Mammary epithelial cell (primary cell): ENCODE measurements at regions of chr10 and their contacts with region 1.

Region 1: DNA sequence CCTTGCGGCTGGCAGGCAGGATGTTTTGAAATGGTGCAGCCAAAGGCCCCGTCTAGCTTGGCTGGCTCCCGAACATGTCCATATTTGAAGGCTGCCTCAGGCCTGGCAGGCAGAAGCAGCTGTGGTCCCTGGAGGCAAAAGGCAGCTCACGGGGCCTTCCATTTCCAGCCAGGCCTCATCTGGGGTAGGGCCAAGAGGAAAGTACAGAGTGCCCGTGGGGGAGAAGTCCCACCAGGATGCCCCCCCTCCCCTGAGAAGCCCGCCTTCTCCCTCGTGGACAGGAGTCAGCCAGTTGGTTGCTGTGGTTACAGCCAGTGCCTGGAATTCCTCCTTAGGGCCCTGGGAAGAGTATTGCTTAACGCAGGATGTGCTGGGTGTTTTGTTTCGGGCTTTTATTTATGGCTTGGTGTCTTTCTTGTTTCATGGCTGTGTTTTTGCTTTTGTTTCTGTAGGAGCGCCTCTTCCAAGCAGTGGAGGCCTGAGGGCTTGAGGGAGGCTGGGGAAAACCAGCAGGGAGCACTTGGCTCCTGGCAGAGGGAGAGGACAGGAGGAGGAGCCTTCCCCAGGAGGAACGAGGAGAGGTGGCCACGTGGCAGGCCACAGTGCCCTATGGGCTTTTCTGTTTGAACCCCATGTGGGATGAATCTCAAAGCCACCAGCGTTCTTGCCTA is 45.4 kb downstream of the CHST3 start:
- DNase-seq: peak; percentile 91
- H3K4me3 ChIP-seq: no peak overlapping the region
- H3K27ac ChIP-seq: peak overlapping the region; percentile 92
- H3K4me1 ChIP-seq: peaks cover 34% of the 10 kb centered on the region
- H3K27me3 ChIP-seq: no peaks in the 10 kb centered on the region
- CTCF ChIP-seq: no peak

Region 2: GRCh38 chr10:71829171-71829570 is 180.4 kb before region 1 on chr10:
- CTCF ChIA-PET with region 1: no interaction called
- dilution Hi-C with region 1: no loop called
- in situ Hi-C with region 1: no loop called
- intact Hi-C with region 1: no loop called
- DNase-seq: no peak
- H3K4me3 ChIP-seq: no peak overlapping the region
- H3K27ac ChIP-seq: no peak overlapping the region
- H3K4me1 ChIP-seq: peaks cover 13% of the 10 kb centered on the region
- H3K27me3 ChIP-seq: no peaks in the 10 kb centered on the region
- CTCF ChIP-seq: no peak

Region 3: DNA sequence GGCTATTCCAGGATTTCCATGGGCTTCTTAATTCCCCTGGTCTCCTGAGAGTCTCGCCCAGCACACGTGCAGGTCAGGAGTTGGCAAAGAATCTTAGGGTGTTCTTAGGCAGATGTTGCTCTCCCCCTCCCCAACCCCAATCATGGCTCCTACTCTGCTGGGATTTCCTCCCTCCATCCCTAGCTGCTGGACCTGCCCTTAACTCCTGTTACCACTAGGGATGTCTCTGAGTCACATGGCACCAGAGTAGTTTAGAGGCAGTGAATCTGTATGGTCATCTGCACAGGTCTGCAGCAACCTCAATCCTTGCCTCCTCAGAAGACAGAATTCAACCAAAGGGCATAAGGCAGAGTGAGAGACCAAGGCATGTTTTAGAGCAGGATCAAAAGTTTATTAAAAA is 97.1 kb before region 1 on chr10:
- CTCF ChIA-PET with region 1: no interaction called
- dilution Hi-C with region 1: loop called (anchors 5 kb)
- in situ Hi-C with region 1: no loop called
- intact Hi-C with region 1: no loop called
- DNase-seq: no peak
- H3K4me3 ChIP-seq: no peak overlapping the region
- H3K27ac ChIP-seq: no peak overlapping the region
- H3K4me1 ChIP-seq: no peaks in the 10 kb centered on the region
- H3K27me3 ChIP-seq: no peaks in the 10 kb centered on the region
- CTCF ChIP-seq: peak; percentile 21 to 30

Region 4: GRCh38 chr10:71963756-71964668 is 45.5 kb before region 1 on chr10 and contains the start of gene CHST3:
- CTCF ChIA-PET with region 1: no interaction called
- dilution Hi-C with region 1: no loop called
- in situ Hi-C with region 1: no loop called
- intact Hi-C with region 1: loop called (anchors 2 kb)
- DNase-seq: peak; percentile 54
- H3K4me3 ChIP-seq: peak within 1 kb of the TSS; percentile 73 to 85 (median 80)
- H3K27ac ChIP-seq: peak within 1 kb of the TSS; percentile 91
- H3K4me1 ChIP-seq: peaks cover 31% of the 10 kb centered on the region
- H3K27me3 ChIP-seq: no peaks in the 10 kb centered on the region
- CTCF ChIP-seq: no peak
- total RNA-seq, gene CHST3: 32.4 to 85.0 TPM

Region 5: GRCh38 chr10:71974489-71975021 is 35.0 kb before region 1 on chr10:
- CTCF ChIA-PET with region 1: no interaction called
- dilution Hi-C with region 1: no loop called
- in situ Hi-C with region 1: no loop called
- intact Hi-C with region 1: loop called (anchors 1 kb)
- DNase-seq: peak; percentile 92
- H3K4me3 ChIP-seq: no peak overlapping the region
- H3K27ac ChIP-seq: peak overlapping the region; percentile 88
- H3K4me1 ChIP-seq: peaks cover 96% of the 10 kb centered on the region
- H3K27me3 ChIP-seq: no peaks in the 10 kb centered on the region
- CTCF ChIP-seq: no peak

Region 6: DNA sequence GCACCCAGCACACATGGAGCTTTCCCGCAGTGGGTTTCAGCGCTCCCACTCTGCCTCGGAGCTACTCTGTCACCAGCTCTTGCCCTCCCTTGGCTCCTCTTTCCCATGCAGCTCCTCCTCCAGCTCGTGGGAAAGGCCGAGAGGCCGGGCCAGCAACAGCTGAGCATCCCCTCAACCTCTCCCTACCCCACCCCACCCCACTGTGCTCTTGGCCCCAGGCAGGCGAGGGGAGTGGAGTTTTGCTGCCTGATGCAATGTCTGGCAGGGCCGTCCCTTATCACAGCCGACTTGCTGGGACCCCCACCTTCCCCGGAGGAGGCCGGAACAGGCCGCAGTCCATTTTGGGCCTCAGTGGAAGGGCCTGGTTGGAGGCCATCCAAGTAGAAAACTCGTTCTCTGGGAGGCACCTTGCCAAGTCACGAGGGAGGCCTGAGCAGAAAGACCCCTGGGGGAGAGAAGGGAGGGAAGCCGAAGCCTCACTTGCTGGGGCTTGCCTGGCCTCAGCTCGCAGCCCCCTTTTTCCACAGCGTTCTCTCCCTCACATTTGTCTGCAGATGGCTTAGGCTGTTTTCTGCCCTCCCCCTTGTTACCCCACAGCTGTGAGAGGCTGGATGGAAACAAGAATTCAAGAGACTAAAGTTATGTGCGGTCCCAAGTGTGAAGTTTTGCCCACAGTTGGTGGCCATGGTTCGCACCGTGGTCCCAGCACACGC is 10.0 kb before region 1 on chr10:
- CTCF ChIA-PET with region 1: no interaction called
- dilution Hi-C with region 1: no loop called
- in situ Hi-C with region 1: no loop called
- intact Hi-C with region 1: loop called (anchors 1 kb)
- DNase-seq: no peak
- H3K4me3 ChIP-seq: no peak overlapping the region
- H3K27ac ChIP-seq: peak overlapping the region; percentile 82
- H3K4me1 ChIP-seq: peaks cover 45% of the 10 kb centered on the region
- H3K27me3 ChIP-seq: no peaks in the 10 kb centered on the region
- CTCF ChIP-seq: no peak

Region 7: DNA sequence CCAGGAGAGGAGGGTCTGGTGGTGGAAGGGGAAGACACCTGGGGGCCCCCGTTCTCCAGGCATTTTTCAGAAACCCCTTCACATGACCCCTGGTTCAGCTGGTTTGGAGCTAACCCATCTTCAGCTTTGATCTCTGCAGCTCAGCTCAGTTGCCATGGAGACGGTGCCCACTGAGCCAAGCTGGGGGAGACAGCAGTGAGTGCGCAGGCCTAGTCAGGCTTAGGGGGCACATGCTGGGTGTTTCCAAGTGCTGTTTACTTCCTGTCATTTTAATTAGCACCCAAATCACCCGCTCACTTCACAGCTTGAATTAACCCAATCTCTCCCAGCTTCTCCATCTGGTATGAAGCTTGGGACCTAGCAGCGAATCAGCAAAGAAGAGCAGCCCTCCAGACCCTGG is 69.8 kb after region 1 on chr10:
- CTCF ChIA-PET with region 1: no interaction called
- dilution Hi-C with region 1: loop called (anchors 5 kb)
- in situ Hi-C with region 1: no loop called
- intact Hi-C with region 1: no loop called
- DNase-seq: no peak
- H3K4me3 ChIP-seq: no peak overlapping the region
- H3K27ac ChIP-seq: no peak overlapping the region
- H3K4me1 ChIP-seq: peaks cover 22% of the 10 kb centered on the region
- H3K27me3 ChIP-seq: no peaks in the 10 kb centered on the region
- CTCF ChIP-seq: no peak

Region 8: GRCh38 chr10:72173635-72174296 is 164.2 kb after region 1 on chr10:
- CTCF ChIA-PET with region 1: no interaction called
- dilution Hi-C with region 1: no loop called
- in situ Hi-C with region 1: no loop called
- intact Hi-C with region 1: loop called (anchors 5 kb)
- DNase-seq: no peak
- H3K4me3 ChIP-seq: no peak overlapping the region
- H3K27ac ChIP-seq: no peak overlapping the region
- H3K4me1 ChIP-seq: peaks cover 42% of the 10 kb centered on the region
- H3K27me3 ChIP-seq: no peaks in the 10 kb centered on the region
- CTCF ChIP-seq: no peak